ENCODE measurements at regions of chr17 and their contacts with region 1.

Region 1: DNA sequence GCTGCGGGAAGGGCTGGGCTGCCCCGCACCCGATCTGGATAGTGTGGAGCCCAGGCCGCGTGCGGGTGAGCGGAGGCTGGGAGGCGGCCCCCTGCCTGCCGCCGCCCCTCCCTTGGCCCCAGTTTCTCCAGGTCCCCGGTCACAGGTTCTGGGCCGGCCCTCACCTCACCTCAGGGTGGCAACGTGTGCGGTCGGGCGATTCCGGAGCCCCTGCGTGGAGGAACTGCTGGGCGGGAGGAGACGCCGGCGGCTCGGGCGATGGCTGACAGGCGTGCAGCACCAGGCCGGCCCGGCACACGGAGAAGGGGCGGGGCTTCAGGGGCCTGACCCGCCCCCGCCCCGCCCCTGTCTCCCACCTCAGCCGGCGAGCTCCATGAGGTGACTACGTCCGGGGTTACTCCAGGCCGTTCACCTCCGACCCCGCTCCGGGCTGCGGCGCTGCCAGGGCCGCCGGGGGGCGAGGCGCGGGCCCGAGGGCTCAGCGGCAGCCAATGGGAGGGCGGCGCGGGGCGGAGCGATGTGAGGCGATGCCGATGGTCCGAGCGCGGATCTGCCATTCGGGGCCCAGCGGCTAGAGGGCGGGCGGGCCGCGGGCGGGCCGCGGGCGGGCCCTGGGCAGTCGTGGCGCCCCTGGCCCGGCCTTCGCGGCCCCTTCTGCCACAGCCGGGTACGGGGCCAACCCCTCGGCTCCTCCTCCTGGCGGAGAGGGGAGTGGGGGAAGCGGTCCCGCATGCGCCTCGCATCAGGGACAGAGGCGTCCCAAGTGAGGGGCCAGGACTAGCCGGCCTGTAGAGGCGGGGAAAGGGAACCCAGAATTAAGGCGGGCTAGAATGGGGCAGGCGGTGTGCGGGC is 16.7 kb upstream of the C17orf78 start:
- DNase-seq: peak; percentile 94
- H3K4me3 ChIP-seq: peak overlapping the region; percentile 74 to 95 (median 78)
- H3K27ac ChIP-seq: peak overlapping the region; percentile 88 to 91 (median 90)
- H3K4me1 ChIP-seq: peaks cover 6 to 34% (median 21%) of the 10 kb centered on the region in 4 donors
- H3K27me3 ChIP-seq: no peaks in the 10 kb centered on the region
- CTCF ChIP-seq: peak; percentile 16 to 36 (median 21)
- EP300 ChIP-seq: no peak
- POLR2A ChIP-seq: peak; percentile 46

Region 2: DNA sequence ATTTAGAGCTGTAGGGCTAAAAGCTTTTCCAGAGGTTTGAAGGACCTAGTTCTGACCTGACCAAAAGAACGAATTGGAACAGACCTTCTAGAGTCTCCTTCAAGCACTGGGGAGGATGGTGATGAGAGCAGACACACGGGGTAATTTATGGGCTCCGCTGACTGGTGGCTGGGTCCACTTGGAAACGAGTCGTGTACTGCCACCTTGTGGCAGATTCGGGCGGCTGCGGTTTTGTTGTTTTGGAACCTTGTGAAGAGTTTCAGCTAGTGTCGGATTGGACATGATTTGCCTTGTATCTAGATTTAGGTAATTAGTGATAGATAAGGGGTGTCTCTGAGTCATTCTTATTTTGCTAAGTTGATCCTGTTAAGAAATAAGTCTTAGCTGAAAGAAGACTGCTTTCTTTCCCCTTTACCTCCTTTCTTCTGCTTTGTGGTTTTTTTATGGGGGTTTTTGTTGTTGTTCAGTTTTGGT is 311.4 kb before region 1 on chr17:
- in situ Hi-C with region 1: no loop called
- intact Hi-C with region 1: no loop called
- DNase-seq: peak; percentile 75
- H3K4me3 ChIP-seq: no peak overlapping the region
- H3K27ac ChIP-seq: no peak overlapping the region
- H3K4me1 ChIP-seq: peaks cover 0 to 3% (median 2%) of the 10 kb centered on the region in 4 donors
- H3K27me3 ChIP-seq: no peaks in the 10 kb centered on the region
- CTCF ChIP-seq: peak; percentile 81 to 88 (median 86)
- EP300 ChIP-seq: no peak
- POLR2A ChIP-seq: no peak

Region 3: DNA sequence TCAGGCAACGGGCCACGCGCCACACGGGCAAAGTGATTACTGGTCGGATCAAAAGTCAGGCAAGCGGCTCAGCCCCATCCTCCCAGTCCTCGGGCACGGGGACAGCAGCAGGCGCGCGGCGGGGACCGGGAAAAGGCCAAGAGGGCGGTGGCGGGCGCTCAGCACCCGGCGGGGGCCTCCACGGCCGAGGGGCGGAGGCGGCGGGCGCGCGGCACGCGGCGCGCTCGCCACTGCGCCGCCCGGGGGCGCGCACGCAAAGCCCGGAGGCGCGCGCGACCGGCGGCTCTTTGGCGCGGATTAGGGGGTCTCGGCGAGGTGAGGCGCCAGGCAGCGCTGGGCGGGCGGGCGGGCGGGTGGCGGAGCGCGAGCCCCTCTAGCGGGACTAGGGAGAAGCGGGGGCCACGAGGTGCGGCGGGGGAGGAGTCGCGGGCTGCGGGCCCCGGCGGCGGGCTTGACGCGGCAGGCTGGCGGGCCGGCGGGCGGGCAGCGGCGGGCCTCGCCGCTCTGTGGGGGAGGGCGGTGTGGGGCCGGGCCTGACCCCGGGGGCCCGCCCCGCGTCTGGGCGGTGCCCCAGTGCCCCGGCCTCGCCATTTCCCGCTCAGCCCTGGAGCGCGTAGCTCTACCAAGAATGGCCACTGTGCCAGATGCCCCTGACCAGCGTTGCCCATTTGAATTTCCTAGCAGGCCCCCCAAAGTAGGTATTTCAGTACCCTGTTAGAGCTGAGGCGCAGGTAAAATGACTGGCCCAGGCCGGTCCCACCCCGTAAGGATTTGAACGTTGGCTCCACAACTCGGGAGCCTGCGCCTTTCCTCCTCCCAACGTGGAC is 47.8 kb after region 1 on chr17 and contains the starts of genes ACACA and TADA2A:
- in situ Hi-C with region 1: no loop called
- intact Hi-C with region 1: loop called (anchors 10 kb)
- DNase-seq: peak; percentile 85
- H3K4me3 ChIP-seq: peak within 1 kb of the TSS; percentile 57 to 92 (median 68)
- H3K27ac ChIP-seq: peak within 1 kb of the TSS; percentile 91 to 97 (median 94)
- H3K4me1 ChIP-seq: peaks cover 4 to 25% (median 16%) of the 10 kb centered on the region in 4 donors
- H3K27me3 ChIP-seq: no peaks in the 10 kb centered on the region
- CTCF ChIP-seq: peak in 3 of 5 experiments; percentile 19 to 56 (median 51)
- EP300 ChIP-seq: no peak
- POLR2A ChIP-seq: peak; percentile 76
- total RNA-seq, gene ACACA: 21.7 to 173 (median 23.9) TPM
- total RNA-seq, gene TADA2A: 8.3 to 26.6 (median 12.4) TPM